IMR-90 (cell line): ENCODE measurements at regions of chr7 and their contacts with region 1.

Region 1: DNA sequence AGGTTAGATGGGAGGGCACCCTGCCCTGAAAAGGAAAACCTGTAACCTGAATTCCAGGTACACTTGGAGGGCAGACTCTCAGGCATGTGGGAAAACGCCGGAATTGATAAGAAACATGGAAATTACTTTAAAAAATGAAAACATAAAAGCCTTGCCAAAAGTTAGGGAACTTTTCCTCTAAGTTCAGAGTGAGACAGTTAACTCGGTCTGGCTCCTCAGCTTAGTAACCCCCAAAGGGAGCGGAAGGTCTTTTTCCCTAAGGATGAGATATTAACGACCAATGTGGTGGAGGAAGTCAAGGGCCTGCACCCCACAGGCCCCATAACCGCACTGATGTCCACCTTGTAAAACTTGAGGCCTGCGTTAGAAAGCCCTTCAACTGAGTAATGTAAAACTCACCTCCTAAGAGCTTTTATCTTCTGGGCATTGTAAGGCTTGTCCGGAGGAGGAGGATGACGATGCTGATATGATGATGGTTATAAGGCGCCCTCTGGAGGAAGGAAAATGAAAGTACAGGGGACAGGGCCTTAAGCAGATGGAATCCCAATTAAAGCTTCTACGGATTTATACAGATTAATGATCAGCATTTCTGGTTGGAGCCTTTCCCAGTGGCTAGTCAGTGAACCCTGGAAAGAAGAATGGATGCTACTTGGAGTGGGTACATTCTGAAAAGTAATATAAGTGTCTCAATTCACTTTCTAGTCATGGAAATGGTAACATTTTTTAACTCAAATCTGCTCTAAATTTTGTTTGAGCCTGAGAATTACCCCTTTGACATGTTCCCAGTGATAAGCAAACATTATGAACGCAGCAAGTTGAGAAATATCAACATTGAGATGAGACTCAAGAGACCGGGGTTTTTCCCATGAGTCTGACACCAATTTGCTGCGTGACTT is 694 bp downstream of the COL1A2 start:
- DNase-seq: peak; percentile 90
- ATAC-seq: 0 out of 2 replicates have a peak, but pooled peaks have one; percentile 0
- H3K4me3 ChIP-seq: peak overlapping the region; percentile 81
- H3K27ac ChIP-seq: peak overlapping the region; percentile 94
- H3K4me1 ChIP-seq: peaks cover 15% of the 10 kb centered on the region
- H3K27me3 ChIP-seq: no peaks in the 10 kb centered on the region
- CTCF ChIP-seq: peak; percentile 81
- POLR2A ChIP-seq: no peak
- RAD21 ChIP-seq: peak; percentile 91

Region 2: GRCh38 chr7:94195201-94195600 is 200.2 kb before region 1 on chr7:
- CTCF ChIA-PET with region 1: no interaction called
- POLR2A ChIA-PET with region 1: no interaction called
- dilution Hi-C with region 1: no loop called
- in situ Hi-C with region 1: no loop called
- intact Hi-C with region 1: no loop called
- DNase-seq: no peak
- ATAC-seq: no peak
- H3K4me3 ChIP-seq: no peak overlapping the region
- H3K27ac ChIP-seq: no peak overlapping the region; the same call in 1 of the 2 replicates
- H3K4me1 ChIP-seq: no peaks in the 10 kb centered on the region
- H3K27me3 ChIP-seq: no peaks in the 10 kb centered on the region
- CTCF ChIP-seq: no peak
- POLR2A ChIP-seq: no peak
- RAD21 ChIP-seq: no peak

Region 3: GRCh38 chr7:94289071-94289470 is 106.3 kb before region 1 on chr7:
- CTCF ChIA-PET with region 1: interaction called, 26 read pairs
- POLR2A ChIA-PET with region 1: interaction called, 169 read pairs
- dilution Hi-C with region 1: no loop called
- in situ Hi-C with region 1: no loop called
- intact Hi-C with region 1: no loop called
- DNase-seq: peak; percentile 91
- ATAC-seq: peak; percentile 96
- H3K4me3 ChIP-seq: no peak overlapping the region
- H3K27ac ChIP-seq: no peak overlapping the region
- H3K4me1 ChIP-seq: no peaks in the 10 kb centered on the region
- H3K27me3 ChIP-seq: no peaks in the 10 kb centered on the region
- CTCF ChIP-seq: peak; percentile 100
- POLR2A ChIP-seq: peak; percentile 63
- RAD21 ChIP-seq: peak; percentile 100

Region 4: GRCh38 chr7:94301024-94301586 is 94.3 kb before region 1 on chr7:
- CTCF ChIA-PET with region 1: interaction called, 31 read pairs
- POLR2A ChIA-PET with region 1: interaction called, 169 read pairs
- dilution Hi-C with region 1: no loop called
- in situ Hi-C with region 1: loop called (anchors 5 kb)
- intact Hi-C with region 1: loop called (anchors 1 kb)
- DNase-seq: peak; percentile 98
- ATAC-seq: peak; percentile 80
- H3K4me3 ChIP-seq: peak overlapping the region; percentile 14; the same call in 1 of the 2 replicates
- H3K27ac ChIP-seq: peak overlapping the region; percentile 98
- H3K4me1 ChIP-seq: peaks cover 26% of the 10 kb centered on the region
- H3K27me3 ChIP-seq: no peaks in the 10 kb centered on the region
- CTCF ChIP-seq: 0 out of 2 replicates have a peak, but pooled peaks have one; percentile 26
- POLR2A ChIP-seq: peak; percentile 71
- RAD21 ChIP-seq: peak; percentile 42

Region 5: DNA sequence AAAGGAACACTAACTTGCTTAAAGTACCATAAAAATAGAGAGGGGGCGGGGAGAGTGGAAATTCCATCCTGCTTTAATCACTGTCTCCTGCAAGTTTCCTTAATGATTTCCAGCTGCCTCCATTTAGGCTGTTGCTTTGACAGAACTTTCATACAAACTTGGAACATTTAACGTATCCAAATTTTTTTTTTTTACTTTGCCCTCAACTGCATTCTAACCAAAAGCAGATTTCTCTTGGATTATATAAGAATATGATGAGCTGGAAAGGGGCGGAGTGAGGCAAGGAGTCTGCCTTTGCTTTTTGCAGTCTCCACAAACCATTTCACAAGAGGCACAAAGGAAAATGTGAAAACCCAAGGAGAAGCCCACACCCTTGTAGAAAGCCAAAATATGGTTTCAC is 47.2 kb before region 1 on chr7:
- CTCF ChIA-PET with region 1: no interaction called
- POLR2A ChIA-PET with region 1: interaction called, 3 read pairs
- dilution Hi-C with region 1: no loop called
- in situ Hi-C with region 1: no loop called
- intact Hi-C with region 1: loop called (anchors 5 kb)
- DNase-seq: peak; percentile 95
- ATAC-seq: peak; percentile 88
- H3K4me3 ChIP-seq: peak overlapping the region; percentile 1; the same call in 1 of the 2 replicates
- H3K27ac ChIP-seq: peak overlapping the region; percentile 71
- H3K4me1 ChIP-seq: peaks cover 16% of the 10 kb centered on the region
- H3K27me3 ChIP-seq: no peaks in the 10 kb centered on the region
- CTCF ChIP-seq: no peak
- POLR2A ChIP-seq: no peak
- RAD21 ChIP-seq: no peak

Region 6: DNA sequence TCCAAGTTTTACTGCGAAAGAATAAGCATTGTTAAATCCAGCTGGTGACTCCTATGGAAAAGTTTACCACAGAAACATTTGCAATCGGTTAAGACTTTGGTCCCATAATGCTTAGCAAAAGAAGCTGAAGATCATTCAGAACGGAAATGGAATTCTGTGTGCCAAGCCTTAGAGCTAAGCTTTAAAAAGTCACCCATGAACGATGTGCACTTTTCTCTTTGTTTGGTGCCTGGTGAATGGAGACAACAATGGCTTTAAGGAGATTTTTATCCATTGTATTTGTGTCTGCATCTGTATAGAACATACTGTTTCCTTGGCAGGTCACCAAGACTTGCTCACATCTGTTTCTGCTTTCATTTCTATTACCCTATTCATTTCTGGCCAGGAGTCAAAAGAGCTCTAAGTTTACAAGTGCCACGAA is 27.0 kb before region 1 on chr7:
- CTCF ChIA-PET with region 1: no interaction called
- POLR2A ChIA-PET with region 1: interaction called, 25 read pairs
- dilution Hi-C with region 1: no loop called
- in situ Hi-C with region 1: no loop called
- intact Hi-C with region 1: loop called (anchors 1 kb)
- DNase-seq: peak; percentile 90
- ATAC-seq: peak; percentile 84
- H3K4me3 ChIP-seq: peak overlapping the region; percentile 45; the same call in 1 of the 2 replicates
- H3K27ac ChIP-seq: peak overlapping the region; percentile 54
- H3K4me1 ChIP-seq: peaks cover 12% of the 10 kb centered on the region
- H3K27me3 ChIP-seq: no peaks in the 10 kb centered on the region
- CTCF ChIP-seq: no peak
- POLR2A ChIP-seq: no peak
- RAD21 ChIP-seq: no peak

Region 7: DNA sequence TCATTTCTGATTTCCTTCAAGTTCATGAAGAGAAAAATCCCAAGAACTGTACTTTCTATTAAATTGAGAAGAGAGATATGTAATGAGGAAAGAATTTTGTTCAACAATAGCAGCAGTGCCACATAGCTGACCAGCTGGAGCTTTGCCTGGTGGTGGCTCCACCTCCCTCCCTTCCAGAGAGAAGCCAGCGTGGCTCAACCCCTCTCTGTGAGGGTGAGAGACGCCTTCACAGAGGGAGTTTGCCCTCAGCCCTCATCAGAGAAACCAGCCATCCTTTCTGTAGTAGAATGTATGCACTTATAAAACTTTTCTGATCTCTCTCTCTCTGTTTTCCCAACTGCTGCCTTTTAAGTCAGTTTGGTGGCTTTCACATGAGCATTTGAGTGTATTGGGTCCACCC is 21.2 kb before region 1 on chr7:
- CTCF ChIA-PET with region 1: interaction called, 6 read pairs
- POLR2A ChIA-PET with region 1: interaction called, 77 read pairs
- dilution Hi-C with region 1: no loop called
- in situ Hi-C with region 1: no loop called
- intact Hi-C with region 1: loop called (anchors 1 kb)
- DNase-seq: peak; percentile 93
- ATAC-seq: peak; percentile 85
- H3K4me3 ChIP-seq: peak overlapping the region; percentile 41; the same call in 1 of the 2 replicates
- H3K27ac ChIP-seq: peak overlapping the region; percentile 100
- H3K4me1 ChIP-seq: peaks cover 13% of the 10 kb centered on the region
- H3K27me3 ChIP-seq: no peaks in the 10 kb centered on the region
- CTCF ChIP-seq: no peak; the same call in 1 of the 2 replicates
- POLR2A ChIP-seq: peak; percentile 90
- RAD21 ChIP-seq: peak; percentile 49

Region 8: GRCh38 chr7:94436018-94436604 is 40.7 kb after region 1 on chr7:
- CTCF ChIA-PET with region 1: interaction called, 4 read pairs
- POLR2A ChIA-PET with region 1: interaction called, 11 read pairs
- dilution Hi-C with region 1: no loop called
- in situ Hi-C with region 1: no loop called
- intact Hi-C with region 1: no loop called
- DNase-seq: peak; percentile 78
- ATAC-seq: peak; percentile 43
- H3K4me3 ChIP-seq: no peak overlapping the region
- H3K27ac ChIP-seq: no peak overlapping the region
- H3K4me1 ChIP-seq: peaks cover 8% of the 10 kb centered on the region
- H3K27me3 ChIP-seq: no peaks in the 10 kb centered on the region
- CTCF ChIP-seq: peak; percentile 81
- POLR2A ChIP-seq: no peak
- RAD21 ChIP-seq: peak; percentile 68